Ovary (tissue), 10 donors: ENCODE measurements at regions of chr12 and their contacts with region 1.

Region 1: GRCh38 chr12:107803087-107803486 is 28.6 kb downstream of the ASCL4 start:
- DNase-seq: no peak
- H3K4me3 ChIP-seq: no peak overlapping the region
- H3K27ac ChIP-seq: no peak overlapping the region
- H3K4me1 ChIP-seq: no peaks in the 10 kb centered on the region
- H3K27me3 ChIP-seq: no peaks in the 10 kb centered on the region
- CTCF ChIP-seq: no peak
- EP300 ChIP-seq: no peak
- POLR2A ChIP-seq: no peak

Region 2: GRCh38 chr12:107829271-107829670 is 26.2 kb after region 1 on chr12:
- intact Hi-C with region 1: loop called in 1 of 4 experiments (anchors 2 kb)
- DNase-seq: no peak
- H3K4me3 ChIP-seq: no peak overlapping the region
- H3K27ac ChIP-seq: no peak overlapping the region
- H3K4me1 ChIP-seq: no peaks in the 10 kb centered on the region
- H3K27me3 ChIP-seq: no peaks in the 10 kb centered on the region
- CTCF ChIP-seq: no peak
- EP300 ChIP-seq: no peak
- POLR2A ChIP-seq: no peak